Activated naive CD4-positive, alpha-beta T cell treated with anti-CD3 and anti-CD28 coated beads for 36 hours (primary cell): ENCODE measurements at regions of chr1 and their contacts with region 1.

Region 1: DNA sequence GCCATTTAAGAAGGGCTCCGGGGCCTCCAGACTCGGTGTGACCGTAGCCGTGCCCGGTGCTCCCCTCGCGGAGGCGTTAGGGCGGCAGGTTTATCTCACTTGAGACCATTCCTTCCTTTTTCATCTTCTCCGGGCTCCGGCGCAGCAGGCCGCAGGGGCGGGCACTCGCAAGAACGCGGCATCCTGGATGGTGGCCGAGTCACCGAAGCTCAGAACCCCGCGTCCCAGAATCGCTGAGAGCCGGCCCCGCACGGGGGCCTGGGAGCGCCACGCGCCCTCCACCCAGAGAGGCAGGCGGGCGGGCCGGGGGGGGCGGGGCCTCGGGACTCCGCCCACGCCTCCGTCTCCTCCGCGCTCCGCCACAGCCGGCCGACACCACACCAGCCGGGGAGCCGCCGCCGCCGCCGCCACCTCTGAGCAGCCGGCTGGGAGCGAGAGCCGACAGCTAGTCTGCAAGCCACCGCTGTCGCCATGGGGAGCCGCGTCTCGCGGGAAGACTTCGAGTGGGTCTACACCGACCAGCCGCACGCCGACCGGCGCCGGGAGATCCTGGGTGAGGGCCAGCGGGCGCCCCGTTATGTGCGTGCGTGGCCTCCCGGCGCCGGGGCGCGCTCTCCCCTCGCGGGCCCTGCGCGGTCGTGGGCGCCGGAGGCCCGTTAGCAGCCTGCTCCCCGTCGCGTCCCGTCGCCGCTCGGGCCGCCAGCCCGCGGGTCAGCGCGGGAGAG is at the start of gene DEGS1:
- DNase-seq: peak; percentile 80
- H3K4me3 Mint-ChIP-seq: peak within 1 kb of the TSS; percentile 86
- H3K27ac Mint-ChIP-seq: peak within 1 kb of the TSS; percentile 87
- H3K4me1 Mint-ChIP-seq: peaks cover 40% of the 10 kb centered on the region
- H3K27me3 Mint-ChIP-seq: no peaks in the 10 kb centered on the region
- total RNA-seq, gene DEGS1: 9.2 to 10.1 TPM

Region 2: DNA sequence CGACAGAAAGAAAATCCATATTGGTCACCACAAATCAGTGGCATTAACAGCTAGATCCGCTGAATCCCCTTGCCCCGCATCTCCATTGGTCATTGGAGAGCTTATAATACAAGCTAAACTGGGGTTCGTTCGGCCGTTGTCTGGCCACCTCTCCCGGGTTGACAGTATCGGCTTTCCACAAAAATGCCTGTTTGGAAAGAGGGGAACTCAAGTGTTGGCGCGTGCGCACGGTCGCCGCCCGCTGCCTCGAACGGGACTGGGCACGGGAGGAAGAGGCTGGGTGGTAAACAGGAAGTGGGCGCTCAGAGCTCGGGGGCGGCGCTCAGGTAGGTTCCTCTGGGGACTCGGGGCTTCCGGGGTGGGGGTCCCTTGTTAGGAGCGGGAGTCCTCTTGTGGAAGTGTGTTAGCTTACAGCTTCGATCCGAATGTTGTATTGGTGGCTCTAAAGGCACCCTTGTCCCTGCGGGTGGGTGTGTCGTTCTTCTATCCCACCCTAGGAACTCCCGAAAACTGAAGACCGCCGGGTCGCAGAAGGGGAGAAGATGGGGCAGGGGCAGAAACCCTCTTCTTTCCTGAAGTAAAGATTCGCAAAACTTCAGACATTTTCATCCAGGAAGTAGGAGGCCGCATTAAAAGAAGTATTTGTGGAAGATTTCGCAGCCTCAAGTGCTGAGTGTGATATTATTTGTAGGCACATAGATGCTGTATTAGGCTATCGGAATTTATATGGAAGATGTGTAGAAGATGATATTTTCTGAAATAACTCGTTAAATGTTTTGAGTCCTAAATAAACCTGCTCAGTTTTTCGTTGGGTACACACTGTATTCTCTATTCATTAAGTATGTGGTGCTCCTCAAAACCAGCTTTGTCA is 1469.7 kb before region 1 on chr1:
- CTCF ChIA-PET with region 1: no interaction called
- intact Hi-C with region 1: loop called (anchors 10 kb)
- DNase-seq: peak; percentile 91
- H3K4me3 Mint-ChIP-seq: peak overlapping the region; percentile 100
- H3K27ac Mint-ChIP-seq: peak overlapping the region; percentile 98
- H3K4me1 Mint-ChIP-seq: peaks cover 37% of the 10 kb centered on the region
- H3K27me3 Mint-ChIP-seq: no peaks in the 10 kb centered on the region

Region 3: GRCh38 chr1:223845810-223846682 is 337.0 kb before region 1 on chr1 and contains the start of gene TP53BP2:
- CTCF ChIA-PET with region 1: no interaction called
- intact Hi-C with region 1: loop called (anchors 1 kb)
- DNase-seq: peak; percentile 85
- H3K4me3 Mint-ChIP-seq: peak within 1 kb of the TSS; percentile 93
- H3K27ac Mint-ChIP-seq: peak within 1 kb of the TSS; percentile 97
- H3K4me1 Mint-ChIP-seq: peaks cover 41% of the 10 kb centered on the region
- H3K27me3 Mint-ChIP-seq: no peaks in the 10 kb centered on the region
- total RNA-seq, gene TP53BP2: 40.8 to 44.2 TPM

Region 4: GRCh38 chr1:224205438-224205840 is 22.4 kb after region 1 on chr1:
- CTCF ChIA-PET with region 1: no interaction called
- intact Hi-C with region 1: loop called (anchors 1 kb)
- DNase-seq: peak; percentile 63
- H3K4me3 Mint-ChIP-seq: no peak overlapping the region
- H3K27ac Mint-ChIP-seq: no peak overlapping the region
- H3K4me1 Mint-ChIP-seq: peaks cover 11% of the 10 kb centered on the region
- H3K27me3 Mint-ChIP-seq: no peaks in the 10 kb centered on the region

Region 5: DNA sequence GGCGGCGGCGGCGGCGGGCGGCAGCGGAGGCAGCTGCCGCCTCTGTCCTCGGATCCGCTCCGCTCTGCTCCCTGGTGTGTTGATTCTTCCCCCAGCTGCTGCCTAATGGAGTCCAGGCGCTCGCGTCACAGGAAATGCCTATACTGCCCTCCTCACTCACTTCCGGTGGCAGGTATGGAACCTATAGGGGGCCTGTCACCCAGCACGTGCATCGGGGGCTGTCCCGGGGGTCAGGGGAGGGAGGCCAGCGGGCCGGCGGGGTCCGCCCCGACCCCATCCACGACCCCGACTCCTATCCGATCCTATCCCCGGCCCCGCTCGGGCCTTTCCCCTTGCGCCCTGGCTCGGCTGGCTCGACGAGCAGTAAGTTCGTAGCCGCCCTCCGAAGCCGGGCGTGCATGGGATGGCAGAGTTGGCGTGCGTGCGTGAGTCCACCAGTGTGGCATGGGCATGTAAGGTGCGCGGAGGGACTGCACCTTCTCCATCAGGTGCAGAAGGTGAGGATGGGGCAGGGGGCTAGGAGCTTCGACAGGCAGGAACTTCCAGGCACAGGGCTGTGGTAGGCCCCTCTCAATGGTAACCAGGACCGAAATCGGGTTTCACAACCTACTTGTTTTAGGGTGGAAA is 251.8 kb after region 1 on chr1 and contains the start of gene WDR26:
- CTCF ChIA-PET with region 1: no interaction called
- intact Hi-C with region 1: loop called (anchors 2 kb)
- DNase-seq: peak; percentile 91
- H3K4me3 Mint-ChIP-seq: peak within 1 kb of the TSS; percentile 95
- H3K27ac Mint-ChIP-seq: peak within 1 kb of the TSS; percentile 95
- H3K4me1 Mint-ChIP-seq: peaks cover 46% of the 10 kb centered on the region
- H3K27me3 Mint-ChIP-seq: no peaks in the 10 kb centered on the region
- total RNA-seq, gene WDR26: 44.3 to 45.4 TPM

Region 6: DNA sequence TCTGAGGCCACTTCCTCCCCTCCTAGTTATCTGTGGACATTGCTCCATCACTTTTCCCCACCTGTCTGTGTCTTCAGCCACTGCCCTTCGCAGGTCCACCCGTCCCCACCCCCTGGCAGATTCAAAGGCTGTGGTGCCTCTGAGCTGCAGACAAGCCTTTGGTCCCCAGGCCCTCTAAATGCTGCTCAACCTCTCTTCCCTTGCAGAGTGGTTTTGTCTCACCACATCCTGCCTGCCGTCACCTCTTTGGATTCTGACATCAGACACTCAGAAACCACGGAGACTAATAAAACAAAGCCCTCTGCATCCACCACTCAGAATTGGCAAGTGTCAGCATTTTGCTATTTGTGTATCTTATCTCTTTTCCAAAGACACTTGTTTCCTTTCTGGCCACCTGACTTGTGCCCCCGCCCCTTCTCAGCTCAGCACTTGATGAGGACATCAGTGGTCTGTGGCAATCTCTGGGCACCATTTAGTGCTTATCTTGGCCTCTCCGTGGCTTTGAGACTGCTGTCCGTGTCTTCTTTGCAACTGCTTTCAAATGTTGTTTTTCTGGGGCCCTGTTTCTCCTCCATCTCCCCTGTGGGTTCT is 440.8 kb after region 1 on chr1:
- CTCF ChIA-PET with region 1: no interaction called
- intact Hi-C with region 1: loop called (anchors 10 kb)
- DNase-seq: peak; percentile 92
- H3K4me3 Mint-ChIP-seq: peak overlapping the region; percentile 46
- H3K27ac Mint-ChIP-seq: peak overlapping the region; percentile 82
- H3K4me1 Mint-ChIP-seq: peaks cover 23% of the 10 kb centered on the region
- H3K27me3 Mint-ChIP-seq: peaks cover 25% of the 10 kb centered on the region